ENCODE measurements at regions of chr9 and their contacts with region 1.

Region 1: DNA sequence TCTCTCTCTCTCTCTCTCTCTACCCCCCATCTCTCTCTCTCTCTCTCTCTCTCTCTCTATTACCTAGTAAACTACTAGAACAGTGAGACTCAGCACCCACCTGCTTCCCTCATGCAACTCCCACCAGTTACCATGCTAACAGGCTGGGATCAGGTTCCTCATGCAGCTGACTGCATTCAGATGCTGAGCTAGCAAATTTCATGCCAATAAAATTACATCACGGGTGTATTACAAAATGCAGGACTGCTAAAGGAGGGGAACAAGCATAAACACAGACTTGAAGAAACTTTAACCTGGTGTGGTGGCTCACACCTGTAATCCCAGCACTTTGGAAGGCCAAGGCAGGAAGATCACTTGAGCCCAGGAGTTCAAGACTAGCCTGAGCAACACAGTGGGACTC is 76.0 kb downstream of the CEMIP2 start:
- DNase-seq: no peak
- ATAC-seq: no peak
- H3K4me3 ChIP-seq: no peak overlapping the region
- H3K4me3 Mint-ChIP-seq: no peak overlapping the region
- H3K27ac ChIP-seq: no peak overlapping the region
- H3K27ac Mint-ChIP-seq: no peak overlapping the region
- H3K4me1 ChIP-seq: no peaks in the 10 kb centered on the region
- H3K4me1 Mint-ChIP-seq: peaks cover 19% of the 10 kb centered on the region
- H3K27me3 ChIP-seq: no peaks in the 10 kb centered on the region
- H3K27me3 Mint-ChIP-seq: no peaks in the 10 kb centered on the region
- CTCF ChIP-seq: no peak

Region 2: GRCh38 chr9:71806901-71807307 is 114.6 kb after region 1 on chr9:
- CTCF ChIA-PET with region 1: no interaction called
- POLR2A ChIA-PET with region 1: no interaction called
- intact Hi-C with region 1: no loop called
- DNase-seq: peak; percentile 12 to 80 (median 62)
- ATAC-seq: peak; percentile 96
- H3K4me3 ChIP-seq: no peak overlapping the region
- H3K4me3 Mint-ChIP-seq: no peak overlapping the region
- H3K27ac ChIP-seq: no peak overlapping the region
- H3K27ac Mint-ChIP-seq: peak overlapping the region; percentile 27
- H3K4me1 ChIP-seq: peaks cover 6% of the 10 kb centered on the region
- H3K4me1 Mint-ChIP-seq: peaks cover 15% of the 10 kb centered on the region
- H3K27me3 ChIP-seq: no peaks in the 10 kb centered on the region
- H3K27me3 Mint-ChIP-seq: no peaks in the 10 kb centered on the region
- CTCF ChIP-seq: peak; percentile 91

Region 3: DNA sequence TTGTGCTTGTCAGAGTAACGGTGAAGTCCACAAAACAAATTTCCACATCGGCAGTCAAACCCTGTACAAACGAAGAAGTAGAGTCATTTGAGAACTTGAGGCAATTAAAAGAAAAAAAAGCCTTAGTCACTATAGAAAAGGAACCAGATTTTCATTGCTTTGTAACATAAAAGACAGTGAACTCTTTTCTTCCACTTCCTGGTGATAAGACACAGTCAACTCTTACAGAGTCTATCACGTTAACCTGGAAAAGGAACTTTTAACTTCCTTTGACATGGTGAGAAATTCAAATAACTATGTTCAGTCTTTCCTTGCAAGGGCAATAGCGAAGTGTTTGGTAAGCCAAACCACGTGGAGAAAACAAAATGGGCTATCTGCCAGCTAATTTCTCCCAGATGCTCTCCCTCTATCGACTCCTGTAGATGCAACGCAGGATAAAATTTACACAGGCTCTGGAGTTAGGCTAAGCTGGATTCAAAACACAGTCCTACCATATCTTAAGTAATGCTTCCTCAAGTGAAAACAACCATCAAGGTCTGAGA is 663.8 kb after region 1 on chr9:
- CTCF ChIA-PET with region 1: no interaction called
- POLR2A ChIA-PET with region 1: no interaction called
- intact Hi-C with region 1: loop called in 1 of 2 experiments (anchors 10 kb)
- DNase-seq: peak in 1 of 9 experiments; percentile 14
- ATAC-seq: no peak
- H3K4me3 ChIP-seq: no peak overlapping the region
- H3K4me3 Mint-ChIP-seq: no peak overlapping the region
- H3K27ac ChIP-seq: no peak overlapping the region
- H3K27ac Mint-ChIP-seq: peak overlapping the region; percentile 82
- H3K4me1 ChIP-seq: peaks cover 33% of the 10 kb centered on the region
- H3K4me1 Mint-ChIP-seq: peaks cover 62% of the 10 kb centered on the region
- H3K27me3 ChIP-seq: no peaks in the 10 kb centered on the region
- H3K27me3 Mint-ChIP-seq: no peaks in the 10 kb centered on the region
- CTCF ChIP-seq: no peak

Measured in CD8-positive, alpha-beta T cell (primary cell).